ENCODE measurements at regions of chr2 and their contacts with region 1.

Region 1: DNA sequence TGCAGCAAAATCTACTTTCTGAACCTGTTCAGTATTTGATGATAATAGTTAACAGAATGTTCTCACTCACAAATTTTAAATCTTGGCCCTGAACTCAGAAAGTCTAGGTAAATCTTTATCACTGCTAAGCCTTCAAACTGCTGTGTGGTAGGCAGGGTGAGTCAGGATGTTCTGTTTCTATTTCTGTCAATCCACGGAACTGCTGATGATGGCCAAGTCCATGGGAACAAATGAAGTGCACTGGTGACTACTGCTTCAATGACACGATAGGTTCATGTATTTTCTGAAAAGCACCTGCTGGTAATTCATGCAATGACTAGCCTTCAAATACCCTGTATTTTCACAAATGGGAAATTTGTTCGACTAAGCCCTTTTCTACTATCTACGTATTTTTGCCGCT is 14.2 kb downstream of the NIFK start:
- DNase-seq: no peak
- H3K4me3 ChIP-seq: no peak overlapping the region
- H3K4me3 Mint-ChIP-seq: no peak overlapping the region
- H3K27ac ChIP-seq: no peak overlapping the region
- H3K27ac Mint-ChIP-seq: peak overlapping the region in 1 of 7 donors; percentile 11
- H3K4me1 ChIP-seq: no peaks in the 10 kb centered on the region
- H3K4me1 Mint-ChIP-seq: peaks cover 4 to 17% (median 6%) of the 10 kb centered on the region in 4 donors
- H3K27me3 ChIP-seq: no peaks in the 10 kb centered on the region
- H3K27me3 Mint-ChIP-seq: no peaks in the 10 kb centered on the region

Region 2: DNA sequence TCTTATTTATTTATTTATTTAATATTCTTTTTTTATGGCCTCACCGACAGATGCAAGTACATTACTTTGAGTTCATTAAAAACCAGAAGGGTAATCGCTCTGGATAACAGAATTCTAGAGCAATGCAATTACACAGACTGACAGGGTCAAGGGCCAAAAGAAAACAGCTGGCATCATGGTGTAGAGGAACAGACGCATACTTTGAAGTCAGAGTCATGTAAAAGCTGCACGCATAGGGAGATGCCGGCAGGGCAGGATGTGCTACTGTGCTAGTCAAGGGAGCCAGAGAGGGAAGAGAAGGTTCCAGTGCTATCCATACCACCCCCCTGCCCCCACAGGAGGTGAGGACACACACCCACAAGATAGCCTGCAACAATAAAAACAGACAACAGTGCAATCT is 322.3 kb before region 1 on chr2:
- CTCF ChIA-PET with region 1: interaction called, 39 read pairs
- POLR2A ChIA-PET with region 1: no interaction called
- intact Hi-C with region 1: no loop called
- DNase-seq: no peak
- H3K4me3 ChIP-seq: no peak overlapping the region
- H3K4me3 Mint-ChIP-seq: no peak overlapping the region
- H3K27ac ChIP-seq: no peak overlapping the region
- H3K27ac Mint-ChIP-seq: peak overlapping the region in 1 of 7 donors; percentile 57
- H3K4me1 ChIP-seq: no peaks in the 10 kb centered on the region
- H3K4me1 Mint-ChIP-seq: peaks cover 0 to 4% (median 0%) of the 10 kb centered on the region in 4 donors
- H3K27me3 ChIP-seq: no peaks in the 10 kb centered on the region
- H3K27me3 Mint-ChIP-seq: no peaks in the 10 kb centered on the region

Region 3: GRCh38 chr2:121596221-121597080 is 126.0 kb before region 1 on chr2:
- CTCF ChIA-PET with region 1: interaction called, 4 read pairs
- POLR2A ChIA-PET with region 1: no interaction called
- intact Hi-C with region 1: loop called (anchors 1 kb)
- DNase-seq: no peak
- H3K4me3 ChIP-seq: no peak overlapping the region
- H3K4me3 Mint-ChIP-seq: peak overlapping the region; percentile 25 to 74 (median 48)
- H3K27ac ChIP-seq: peak overlapping the region; percentile 4
- H3K27ac Mint-ChIP-seq: peak overlapping the region; percentile 58 to 91 (median 74)
- H3K4me1 ChIP-seq: peaks cover 35% of the 10 kb centered on the region
- H3K4me1 Mint-ChIP-seq: peaks cover 36 to 63% (median 51%) of the 10 kb centered on the region in 4 donors
- H3K27me3 ChIP-seq: no peaks in the 10 kb centered on the region
- H3K27me3 Mint-ChIP-seq: no peaks in the 10 kb centered on the region

Region 4: GRCh38 chr2:121640385-121641316 is 81.8 kb before region 1 on chr2:
- CTCF ChIA-PET with region 1: no interaction called
- POLR2A ChIA-PET with region 1: no interaction called
- intact Hi-C with region 1: no loop called
- DNase-seq: no peak
- H3K4me3 ChIP-seq: no peak overlapping the region
- H3K4me3 Mint-ChIP-seq: no peak overlapping the region
- H3K27ac ChIP-seq: no peak overlapping the region
- H3K27ac Mint-ChIP-seq: peak overlapping the region in 4 of 7 donors; percentile 18 to 75 (median 39)
- H3K4me1 ChIP-seq: peaks cover 21% of the 10 kb centered on the region
- H3K4me1 Mint-ChIP-seq: peaks cover 31 to 46% (median 37%) of the 10 kb centered on the region in 4 donors
- H3K27me3 ChIP-seq: no peaks in the 10 kb centered on the region
- H3K27me3 Mint-ChIP-seq: no peaks in the 10 kb centered on the region

Region 5: GRCh38 chr2:121699421-121700333 is 22.8 kb before region 1 on chr2:
- CTCF ChIA-PET with region 1: interaction called, 6 read pairs
- POLR2A ChIA-PET with region 1: interaction called, 4 read pairs
- intact Hi-C with region 1: loop called (anchors 1 kb)
- DNase-seq: peak; percentile 80 to 98 (median 83)
- H3K4me3 ChIP-seq: peak overlapping the region; percentile 5 to 36
- H3K4me3 Mint-ChIP-seq: peak overlapping the region; percentile 82 to 92 (median 84)
- H3K27ac ChIP-seq: peak overlapping the region; percentile 55
- H3K27ac Mint-ChIP-seq: peak overlapping the region; percentile 92 to 99 (median 99)
- H3K4me1 ChIP-seq: peaks cover 32% of the 10 kb centered on the region
- H3K4me1 Mint-ChIP-seq: peaks cover 27 to 51% (median 36%) of the 10 kb centered on the region in 4 donors
- H3K27me3 ChIP-seq: no peaks in the 10 kb centered on the region
- H3K27me3 Mint-ChIP-seq: no peaks in the 10 kb centered on the region

Measured in CD4-positive, alpha-beta memory T cell (primary cell).